CD4-positive, alpha-beta T cell (primary cell): ENCODE measurements at regions of chr7 and their contacts with region 1.

Region 1: GRCh38 chr7:124072603-124073309 is 39.9 kb upstream of the TMEM229A start:
- DNase-seq: no peak
- ATAC-seq: no peak
- H3K4me3 ChIP-seq: no peak overlapping the region
- H3K4me3 Mint-ChIP-seq: no peak overlapping the region
- H3K27ac ChIP-seq: no peak overlapping the region
- H3K27ac Mint-ChIP-seq: no peak overlapping the region
- H3K4me1 ChIP-seq: no peaks in the 10 kb centered on the region
- H3K4me1 Mint-ChIP-seq: no peaks in the 10 kb centered on the region
- H3K27me3 ChIP-seq: no peaks in the 10 kb centered on the region
- H3K27me3 Mint-ChIP-seq: no peaks in the 10 kb centered on the region
- CTCF ChIP-seq: no peak

Region 2: GRCh38 chr7:124022551-124022950 is 50.2 kb before region 1 on chr7:
- CTCF ChIA-PET with region 1: no interaction called
- POLR2A ChIA-PET with region 1: no interaction called
- intact Hi-C with region 1: loop called in 1 of 2 experiments (anchors 5 kb)
- DNase-seq: no peak
- ATAC-seq: no peak
- H3K4me3 ChIP-seq: no peak overlapping the region
- H3K4me3 Mint-ChIP-seq: no peak overlapping the region
- H3K27ac ChIP-seq: no peak overlapping the region
- H3K27ac Mint-ChIP-seq: no peak overlapping the region
- H3K4me1 ChIP-seq: no peaks in the 10 kb centered on the region
- H3K4me1 Mint-ChIP-seq: no peaks in the 10 kb centered on the region
- H3K27me3 ChIP-seq: no peaks in the 10 kb centered on the region
- H3K27me3 Mint-ChIP-seq: peaks cover 6% of the 10 kb centered on the region
- CTCF ChIP-seq: no peak

Region 3: GRCh38 chr7:124137664-124138063 is 64.9 kb after region 1 on chr7:
- CTCF ChIA-PET with region 1: no interaction called
- POLR2A ChIA-PET with region 1: no interaction called
- intact Hi-C with region 1: no loop called
- DNase-seq: no peak
- ATAC-seq: no peak
- H3K4me3 ChIP-seq: no peak overlapping the region
- H3K4me3 Mint-ChIP-seq: no peak overlapping the region
- H3K27ac ChIP-seq: no peak overlapping the region
- H3K27ac Mint-ChIP-seq: no peak overlapping the region
- H3K4me1 ChIP-seq: no peaks in the 10 kb centered on the region
- H3K4me1 Mint-ChIP-seq: no peaks in the 10 kb centered on the region
- H3K27me3 ChIP-seq: no peaks in the 10 kb centered on the region
- H3K27me3 Mint-ChIP-seq: no peaks in the 10 kb centered on the region
- CTCF ChIP-seq: no peak